IMR-90 (cell line): ENCODE measurements at regions of chr4 and their contacts with region 1.

Region 1: GRCh38 chr4:44629280-44629866 is 22.1 kb downstream of the YIPF7 start:
- DNase-seq: peak; percentile 43
- ATAC-seq: peak; percentile 86
- H3K4me3 ChIP-seq: no peak overlapping the region
- H3K27ac ChIP-seq: no peak overlapping the region
- H3K4me1 ChIP-seq: no peaks in the 10 kb centered on the region
- H3K27me3 ChIP-seq: no peaks in the 10 kb centered on the region
- CTCF ChIP-seq: peak; percentile 66
- POLR2A ChIP-seq: no peak
- RAD21 ChIP-seq: peak; percentile 55

Region 2: GRCh38 chr4:42995343-42995944 is 1633.9 kb before region 1 on chr4:
- CTCF ChIA-PET with region 1: no interaction called
- POLR2A ChIA-PET with region 1: no interaction called
- dilution Hi-C with region 1: no loop called
- in situ Hi-C with region 1: no loop called
- intact Hi-C with region 1: loop called (anchors 1 kb)
- DNase-seq: peak; percentile 22
- ATAC-seq: no peak
- H3K4me3 ChIP-seq: no peak overlapping the region
- H3K27ac ChIP-seq: no peak overlapping the region
- H3K4me1 ChIP-seq: no peaks in the 10 kb centered on the region
- H3K27me3 ChIP-seq: no peaks in the 10 kb centered on the region
- CTCF ChIP-seq: peak; percentile 77
- POLR2A ChIP-seq: no peak
- RAD21 ChIP-seq: peak; percentile 78